ENCODE measurements at regions of chr7 and their contacts with region 1.

Region 1: GRCh38 chr7:102248456-102249395 is 37.9 kb upstream of the SH2B2 start:
- DNase-seq: no peak
- ATAC-seq: no peak
- H3K4me3 ChIP-seq: no peak overlapping the region
- H3K27ac ChIP-seq: no peak overlapping the region
- H3K4me1 ChIP-seq: no peaks in the 10 kb centered on the region
- H3K27me3 ChIP-seq: no peaks in the 10 kb centered on the region

Region 2: DNA sequence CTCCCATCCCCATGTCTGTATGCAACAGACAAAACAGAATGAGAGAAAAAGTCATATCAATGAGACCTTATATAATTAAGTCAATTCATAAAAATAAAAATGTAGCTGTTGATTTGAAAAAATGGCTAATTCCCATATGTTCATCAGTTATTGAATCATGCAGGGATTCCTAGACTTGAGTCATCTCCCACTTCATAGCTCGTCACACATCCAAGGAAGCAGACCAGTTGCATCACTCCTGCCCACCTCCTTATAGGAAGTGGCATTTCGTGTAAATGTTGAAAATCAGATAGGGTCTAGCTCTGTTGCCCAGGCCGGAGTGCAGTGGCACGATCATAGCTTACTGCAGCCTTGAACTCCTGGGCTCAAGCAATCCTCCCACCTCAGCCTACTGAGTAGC is 18.1 kb before region 1 on chr7:
- intact Hi-C with region 1: loop called in 1 of 2 experiments (anchors 2 kb)
- DNase-seq: no peak
- ATAC-seq: no peak
- H3K4me3 ChIP-seq: no peak overlapping the region
- H3K27ac ChIP-seq: no peak overlapping the region
- H3K4me1 ChIP-seq: no peaks in the 10 kb centered on the region
- H3K27me3 ChIP-seq: no peaks in the 10 kb centered on the region